A549 (cell line): ENCODE measurements at regions of chr2 and their contacts with region 1.

Region 1: GRCh38 chr2:70301344-70302194 is at the start of gene FAM136A:
- DNase-seq: peak; percentile 78 to 89
- ATAC-seq: peak; percentile 86 to 94
- H3K4me3 ChIP-seq: peak within 1 kb of the TSS; percentile 95
- H3K27ac ChIP-seq: peak within 1 kb of the TSS; percentile 95 to 96
- H3K4me1 ChIP-seq: peaks cover 6% of the 10 kb centered on the region
- CTCF ChIP-seq: peak; percentile 75
- EP300 ChIP-seq: no peak
- POLR2A ChIP-seq: peak; percentile 96
- RAD21 ChIP-seq: peak; percentile 47 to 55; a peak in 4 of 5 replicates
- polyA plus RNA-seq, gene FAM136A: 88.5 and 117 TPM in 2 replicates

Region 2: DNA sequence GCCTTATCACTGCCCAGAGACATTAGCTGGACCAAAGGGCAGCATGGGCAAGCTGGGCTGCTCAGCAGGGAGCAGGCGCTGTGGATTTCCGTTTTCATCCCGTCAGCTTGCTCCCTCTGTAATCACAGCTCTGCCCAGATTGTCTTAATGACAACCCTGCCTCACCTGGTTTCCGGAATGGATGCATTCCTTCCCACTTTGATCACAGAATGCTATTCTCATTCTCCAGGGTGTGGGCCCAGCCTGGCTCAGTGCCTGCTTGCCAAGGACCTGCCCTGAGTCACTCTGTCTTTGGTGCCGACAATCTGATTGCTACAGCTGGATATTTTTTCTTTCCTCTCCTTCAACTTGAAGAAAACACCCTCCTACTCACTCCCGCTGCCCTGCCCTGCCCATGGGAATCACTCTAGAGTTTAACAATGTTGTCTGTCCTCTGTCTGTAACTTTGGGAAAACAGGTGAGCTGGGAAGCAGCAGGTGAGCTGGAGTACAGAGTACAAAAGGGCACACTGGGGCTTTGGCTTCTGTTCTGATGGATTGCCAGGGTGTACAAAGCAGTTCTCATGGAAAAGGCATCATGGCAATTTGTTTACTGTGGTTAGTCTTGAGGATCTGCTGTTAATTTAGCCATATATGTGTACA is 27.5 kb after region 1 on chr2:
- CTCF ChIA-PET with region 1: interaction called, 39 read pairs
- POLR2A ChIA-PET with region 1: interaction called, 3 read pairs
- DNase-seq: peak; percentile 55 to 68
- ATAC-seq: peak; percentile 82 to 85
- H3K4me3 ChIP-seq: no peak overlapping the region
- H3K27ac ChIP-seq: peak overlapping the region in 1 of 2 experiments; percentile 54; a peak in 3 of 6 replicates
- H3K4me1 ChIP-seq: peaks cover 16% of the 10 kb centered on the region
- CTCF ChIP-seq: no peak
- EP300 ChIP-seq: no peak
- POLR2A ChIP-seq: no peak
- RAD21 ChIP-seq: no peak

Region 3: DNA sequence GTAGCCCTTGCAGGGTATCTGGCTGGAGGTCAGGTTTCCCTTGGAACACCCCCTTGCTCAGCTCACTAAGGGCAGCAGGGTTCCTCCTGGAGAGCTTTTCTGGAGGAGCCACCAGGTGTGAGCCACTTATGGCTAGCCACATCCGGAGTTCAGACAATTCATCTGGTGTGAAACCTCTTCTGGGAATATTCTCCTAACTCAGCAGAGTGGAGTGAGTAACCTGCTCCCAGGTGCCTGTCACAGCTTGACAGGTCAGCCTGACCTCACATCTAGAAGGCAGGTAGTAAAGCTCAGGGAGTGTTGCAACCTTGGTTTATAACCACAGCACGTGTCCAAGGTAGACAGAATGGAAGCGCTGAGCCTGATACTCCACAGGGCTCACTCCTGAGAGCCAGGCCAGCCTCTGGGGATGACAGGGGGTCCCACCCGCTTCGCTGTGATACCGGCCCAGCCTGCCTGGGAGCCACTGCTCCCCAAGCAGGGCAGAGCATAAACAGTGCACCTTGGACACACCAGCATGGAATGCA is 314.7 kb after region 1 on chr2:
- CTCF ChIA-PET with region 1: interaction called, 182 read pairs
- POLR2A ChIA-PET with region 1: interaction called, 3 read pairs
- DNase-seq: no peak
- ATAC-seq: no peak
- H3K4me3 ChIP-seq: no peak overlapping the region
- H3K27ac ChIP-seq: no peak overlapping the region
- H3K4me1 ChIP-seq: no peaks in the 10 kb centered on the region
- CTCF ChIP-seq: no peak
- EP300 ChIP-seq: no peak
- POLR2A ChIP-seq: no peak
- RAD21 ChIP-seq: no peak

Region 4: DNA sequence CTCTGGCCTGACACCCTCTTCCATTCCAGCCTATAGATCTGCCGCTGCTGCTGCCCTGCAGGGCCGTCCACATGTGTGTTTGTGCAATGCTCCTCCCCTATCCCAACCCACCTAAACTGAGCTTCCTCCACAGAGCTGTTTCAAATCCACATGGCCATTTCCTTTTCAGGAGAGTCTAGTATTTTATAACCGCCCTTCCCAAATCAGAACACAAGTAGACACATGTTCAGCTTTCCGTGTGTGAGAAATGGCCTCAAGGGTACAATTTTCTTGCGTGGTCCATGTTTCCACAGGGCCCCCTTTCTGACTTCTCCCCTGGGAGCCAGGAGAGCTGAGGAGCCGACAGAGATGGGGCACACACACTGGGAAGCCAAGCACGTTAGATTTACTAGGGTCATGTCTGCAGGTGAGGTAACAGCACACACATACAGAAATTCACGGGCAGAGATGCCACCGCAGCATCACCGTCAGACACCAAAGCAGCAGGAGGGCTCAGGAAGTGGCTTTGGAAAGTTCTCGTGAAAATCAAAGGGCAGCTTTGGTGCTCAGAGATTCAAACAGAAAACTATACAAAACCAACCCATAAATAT is 354.9 kb after region 1 on chr2:
- CTCF ChIA-PET with region 1: interaction called, 322 read pairs
- POLR2A ChIA-PET with region 1: no interaction called
- DNase-seq: no peak
- ATAC-seq: no peak
- H3K4me3 ChIP-seq: no peak overlapping the region
- H3K27ac ChIP-seq: no peak overlapping the region
- H3K4me1 ChIP-seq: no peaks in the 10 kb centered on the region
- CTCF ChIP-seq: no peak
- EP300 ChIP-seq: no peak
- POLR2A ChIP-seq: no peak
- RAD21 ChIP-seq: no peak

Region 5: DNA sequence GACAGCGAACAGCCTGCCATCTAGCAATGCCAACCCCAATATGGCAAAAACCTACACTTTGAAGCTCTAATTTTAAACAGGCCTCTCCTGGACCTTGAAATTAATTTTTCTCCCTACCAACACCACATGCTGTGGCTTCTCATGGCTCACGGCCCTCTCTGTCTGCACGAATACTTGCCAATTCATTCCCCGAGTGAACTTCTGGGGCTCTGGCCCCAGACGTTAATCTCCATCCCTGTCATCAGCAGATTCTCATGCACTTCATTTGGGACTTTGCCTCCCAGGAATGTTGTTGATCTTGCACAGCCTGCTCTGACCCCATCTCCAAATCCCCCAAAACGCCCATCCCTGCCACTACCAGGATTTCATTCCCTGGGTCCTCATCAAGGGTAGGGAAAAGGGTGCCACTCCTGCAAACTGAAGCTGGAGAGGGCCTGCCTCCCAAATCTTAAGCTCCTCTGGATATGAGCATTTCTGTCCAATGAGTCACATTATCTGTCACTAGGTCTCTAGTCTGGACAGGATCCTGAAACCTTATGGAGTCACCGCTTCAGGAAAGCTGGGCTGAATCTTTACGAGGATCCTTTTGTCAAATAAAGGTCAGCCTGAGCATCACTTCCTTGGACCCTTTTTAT is 478.5 kb after region 1 on chr2:
- CTCF ChIA-PET with region 1: interaction called, 12 read pairs
- POLR2A ChIA-PET with region 1: interaction called, 3 read pairs
- DNase-seq: no peak
- ATAC-seq: peak in 1 of 2 experiments; percentile 44; a peak in 2 of 6 replicates
- H3K4me3 ChIP-seq: no peak overlapping the region
- H3K27ac ChIP-seq: no peak overlapping the region
- H3K4me1 ChIP-seq: peaks cover 23% of the 10 kb centered on the region
- CTCF ChIP-seq: no peak
- EP300 ChIP-seq: no peak
- POLR2A ChIP-seq: no peak
- RAD21 ChIP-seq: no peak